Ascending aorta (tissue), 2 donors: ENCODE measurements at regions of chr3 and their contacts with region 1.

Region 1: DNA sequence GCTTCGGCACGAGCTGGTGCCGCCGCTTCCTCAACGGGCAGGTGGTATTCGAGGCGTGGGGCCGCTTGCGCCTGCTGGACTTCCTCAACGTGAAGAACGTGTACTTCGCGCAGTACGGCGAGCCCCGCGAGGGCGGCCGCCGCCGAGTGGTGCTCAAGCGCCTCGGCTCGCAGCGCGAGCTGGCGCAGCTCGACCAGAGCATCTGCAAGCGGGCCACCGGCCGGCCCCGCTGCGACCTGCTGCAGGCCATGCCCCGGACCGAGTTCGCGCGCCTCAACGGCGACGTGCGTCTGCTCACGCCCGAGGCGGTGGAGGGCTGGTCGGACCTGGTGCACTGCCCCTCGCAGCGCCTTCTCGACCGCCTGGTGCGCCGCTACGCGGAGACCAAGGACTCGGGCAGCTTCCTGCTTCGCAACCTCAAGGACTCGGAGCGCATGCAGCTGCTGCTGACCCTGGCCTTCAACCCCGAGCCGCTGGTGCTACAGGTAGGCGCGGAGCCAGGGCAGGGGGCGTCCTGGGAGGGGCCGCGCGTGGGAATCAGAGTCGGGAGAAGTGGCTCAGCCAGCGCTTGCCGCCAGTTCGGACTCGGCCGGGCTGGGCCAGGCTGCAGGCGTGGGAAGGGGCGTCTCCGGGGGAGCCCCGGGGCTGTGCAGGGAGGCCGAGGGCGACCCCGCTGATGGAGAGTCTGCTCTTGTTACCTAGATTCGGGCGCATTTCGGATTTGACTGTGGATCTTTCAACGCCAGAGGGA is 1.1 kb downstream of the DIPK2A start:
- DNase-seq: peak; percentile 39 to 88
- H3K4me3 ChIP-seq: peak overlapping the region; percentile 79 to 94
- H3K27ac ChIP-seq: peak overlapping the region; percentile 97 to 98
- H3K4me1 ChIP-seq: peaks cover 0 to 3% of the 10 kb centered on the region in 2 donors
- H3K27me3 ChIP-seq: no peaks in the 10 kb centered on the region
- CTCF ChIP-seq: peak; percentile 32 to 53 (median 36)

Region 2: GRCh38 chr3:142211035-142211434 is 1761.6 kb before region 1 on chr3:
- intact Hi-C with region 1: loop called (anchors 5 kb)
- DNase-seq: no peak
- H3K4me3 ChIP-seq: no peak overlapping the region
- H3K27ac ChIP-seq: peak overlapping the region; percentile 71 to 72
- H3K4me1 ChIP-seq: peaks cover 0 to 45% of the 10 kb centered on the region in 2 donors
- H3K27me3 ChIP-seq: no peaks in the 10 kb centered on the region
- CTCF ChIP-seq: no peak

Region 3: DNA sequence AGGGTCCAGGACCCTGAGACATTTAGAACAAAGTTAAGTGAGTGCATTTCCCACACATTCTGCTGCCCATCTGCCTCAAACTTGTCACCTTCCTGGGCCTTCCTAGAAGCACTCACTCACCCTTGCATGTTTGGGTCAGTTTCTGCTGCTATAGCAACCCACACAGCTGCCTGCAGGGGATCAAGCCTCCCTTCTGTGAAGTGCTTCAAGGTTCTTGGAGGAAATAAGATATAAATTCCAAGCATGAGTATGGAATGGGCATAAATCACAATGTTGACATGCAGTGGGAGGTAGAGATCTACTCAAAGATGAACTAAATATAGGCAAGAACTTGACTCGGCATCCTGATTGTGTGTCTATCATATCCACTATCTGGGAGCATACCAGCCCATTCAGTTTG is 264.8 kb before region 1 on chr3:
- intact Hi-C with region 1: no loop called
- DNase-seq: no peak
- H3K4me3 ChIP-seq: no peak overlapping the region
- H3K27ac ChIP-seq: no peak overlapping the region
- H3K4me1 ChIP-seq: no peaks in the 10 kb centered on the region
- H3K27me3 ChIP-seq: no peaks in the 10 kb centered on the region
- CTCF ChIP-seq: no peak

Region 4: DNA sequence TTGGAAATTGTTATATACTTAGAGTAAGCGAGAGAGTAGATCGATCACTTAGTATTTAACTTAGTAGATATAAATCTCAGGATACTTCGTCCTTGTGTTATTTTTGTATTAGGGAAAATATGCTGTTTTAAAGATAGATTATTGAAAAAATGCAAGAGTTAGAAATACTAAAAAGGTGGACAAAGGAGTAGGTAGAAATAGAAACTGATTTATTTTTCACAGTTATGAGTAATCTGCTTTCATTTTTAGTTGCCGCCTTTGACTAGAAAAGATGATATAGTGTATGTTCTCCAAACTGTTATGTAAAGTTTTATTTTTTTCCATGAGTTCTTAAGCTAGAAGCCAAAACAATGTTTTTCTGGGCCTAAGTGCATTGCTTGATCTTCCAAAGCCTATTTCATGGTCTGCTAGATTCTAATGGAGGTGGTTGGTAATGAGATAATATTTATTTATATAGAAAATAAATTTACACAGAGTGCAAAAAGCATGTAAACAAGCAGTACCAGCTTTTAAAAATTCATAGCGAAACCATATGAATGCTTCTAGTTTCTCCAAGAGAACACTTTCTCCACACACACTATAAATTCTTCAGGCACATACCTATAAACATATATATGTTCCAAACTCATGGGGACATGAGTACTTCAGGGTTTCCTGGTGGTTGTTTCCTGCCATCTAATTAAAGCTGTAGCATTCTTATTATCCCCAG is 60.0 kb after region 1 on chr3:
- intact Hi-C with region 1: loop called (anchors 2 kb)
- DNase-seq: no peak
- H3K4me3 ChIP-seq: peak overlapping the region; percentile 4 to 50
- H3K27ac ChIP-seq: peak overlapping the region; percentile 65 to 68
- H3K4me1 ChIP-seq: peaks cover 0 to 8% of the 10 kb centered on the region in 2 donors
- H3K27me3 ChIP-seq: no peaks in the 10 kb centered on the region
- CTCF ChIP-seq: no peak

Region 5: DNA sequence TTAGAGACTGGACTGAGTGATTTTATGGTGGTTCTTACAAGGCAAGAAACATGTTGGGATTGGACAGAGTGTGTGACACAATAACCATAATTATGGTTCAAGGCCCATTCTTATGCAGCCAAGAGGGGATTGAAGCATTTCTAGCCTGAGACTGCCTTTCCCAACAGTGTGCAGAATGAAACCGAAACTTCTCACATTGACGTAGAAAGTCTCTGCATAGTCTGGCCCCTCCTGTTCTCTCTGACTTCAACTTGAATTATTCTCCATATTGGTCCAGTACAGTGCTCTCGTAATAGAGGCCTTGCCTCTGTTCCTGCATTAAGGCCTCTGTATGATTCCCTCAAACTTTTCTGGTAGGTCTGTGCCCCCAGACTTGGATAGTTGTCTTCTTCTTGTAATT is 137.3 kb after region 1 on chr3:
- intact Hi-C with region 1: loop called (anchors 5 kb)
- DNase-seq: no peak
- H3K4me3 ChIP-seq: peak overlapping the region in 1 of 2 donors; percentile 5
- H3K27ac ChIP-seq: no peak overlapping the region
- H3K4me1 ChIP-seq: peaks cover 0 to 7% of the 10 kb centered on the region in 2 donors
- H3K27me3 ChIP-seq: no peaks in the 10 kb centered on the region
- CTCF ChIP-seq: no peak

Region 6: DNA sequence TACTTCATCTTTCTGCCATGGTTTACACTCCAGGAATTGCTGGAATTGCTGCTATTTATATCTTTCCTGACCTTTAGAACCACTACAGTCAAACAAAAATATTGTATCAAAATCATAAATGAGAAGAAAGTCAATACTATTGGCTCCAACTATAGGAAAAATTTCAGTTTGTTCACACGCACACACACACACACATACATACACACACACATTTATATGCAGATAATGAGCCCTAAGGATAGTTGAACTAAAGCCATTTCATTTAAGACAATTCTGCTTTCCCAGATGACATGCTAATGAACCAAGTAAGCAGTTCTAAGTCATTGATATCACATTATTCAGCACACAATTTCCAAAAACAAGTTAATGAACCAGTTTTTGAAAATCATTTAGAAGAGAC is 1561.0 kb after region 1 on chr3:
- intact Hi-C with region 1: loop called (anchors 5 kb)
- DNase-seq: no peak
- H3K4me3 ChIP-seq: no peak overlapping the region
- H3K27ac ChIP-seq: peak overlapping the region; percentile 49 to 62
- H3K4me1 ChIP-seq: peaks cover 0 to 14% of the 10 kb centered on the region in 2 donors
- H3K27me3 ChIP-seq: no peaks in the 10 kb centered on the region
- CTCF ChIP-seq: no peak